ENCODE measurements at regions of chr20 and their contacts with region 1.

Region 1: DNA sequence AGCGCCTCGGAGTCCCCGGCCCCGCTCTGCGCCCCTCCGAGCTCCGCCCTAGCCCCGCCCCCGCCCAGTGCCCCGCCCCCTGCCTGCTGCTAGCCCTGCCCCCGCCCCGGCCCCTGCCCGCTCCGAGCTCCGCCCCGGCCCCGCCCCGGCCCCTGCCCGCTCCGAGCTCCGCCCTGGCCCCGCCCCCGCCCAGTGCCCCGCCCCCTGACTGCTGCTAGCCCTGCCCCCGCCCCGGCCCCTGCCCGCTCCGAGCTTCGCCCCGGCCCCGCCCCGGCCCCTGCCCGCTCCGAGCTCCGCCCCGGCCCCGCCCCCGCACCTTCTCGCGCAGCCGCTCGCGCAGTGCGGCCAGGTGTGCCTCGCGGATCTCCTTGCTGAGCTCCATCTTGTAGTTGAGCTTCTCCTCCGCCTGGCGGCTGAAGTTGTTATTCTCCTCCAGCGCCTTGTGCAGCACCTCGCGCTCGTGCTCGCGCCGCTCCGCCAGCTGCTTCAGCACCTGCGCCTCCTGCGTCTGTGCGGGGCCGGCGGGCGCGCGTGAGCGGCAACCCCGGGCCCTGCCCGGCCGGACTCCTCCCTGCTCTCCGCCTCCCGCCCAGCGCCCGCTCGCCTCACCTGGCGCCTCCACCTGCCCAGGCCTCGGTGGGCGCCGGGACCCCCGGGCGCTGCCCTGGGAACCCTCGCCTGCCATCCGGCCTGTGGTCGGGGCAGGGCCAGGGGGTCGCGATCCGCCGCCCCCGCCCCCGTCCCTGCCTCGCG is 11.3 kb downstream of the STMN3 start:
- DNase-seq: peak; percentile 94 to 99 (median 96)
- H3K4me3 ChIP-seq: peak overlapping the region; percentile 82
- H3K4me3 Mint-ChIP-seq: peak overlapping the region; percentile 41 to 95 (median 82)
- H3K27ac ChIP-seq: peak overlapping the region; percentile 79
- H3K27ac Mint-ChIP-seq: peak overlapping the region in 4 of 8 donors; percentile 74 to 96 (median 80)
- H3K4me1 ChIP-seq: peaks cover 25% of the 10 kb centered on the region
- H3K4me1 Mint-ChIP-seq: peaks cover 25 to 38% (median 29%) of the 10 kb centered on the region in 3 donors
- H3K27me3 ChIP-seq: no peaks in the 10 kb centered on the region
- H3K27me3 Mint-ChIP-seq: no peaks in the 10 kb centered on the region

Region 2: GRCh38 chr20:63520504-63520933 is 121.4 kb before region 1 on chr20 and contains the start of gene PPDPF:
- CTCF ChIA-PET with region 1: interaction called, 8 read pairs
- POLR2A ChIA-PET with region 1: interaction called, 10 read pairs
- DNase-seq: peak; percentile 79 to 89 (median 84)
- H3K4me3 ChIP-seq: peak within 1 kb of the TSS; percentile 70
- H3K4me3 Mint-ChIP-seq: peak within 1 kb of the TSS; percentile 76 to 91 (median 81)
- H3K27ac ChIP-seq: peak within 1 kb of the TSS; percentile 79
- H3K27ac Mint-ChIP-seq: peak within 1 kb of the TSS; percentile 35 to 91 (median 76)
- H3K4me1 ChIP-seq: peaks cover 20% of the 10 kb centered on the region
- H3K4me1 Mint-ChIP-seq: peaks cover 8 to 34% (median 10%) of the 10 kb centered on the region in 3 donors
- H3K27me3 ChIP-seq: no peaks in the 10 kb centered on the region
- H3K27me3 Mint-ChIP-seq: no peaks in the 10 kb centered on the region
- total RNA-seq, gene PPDPF: 207 to 218 TPM

Region 3: GRCh38 chr20:63553227-63553932 is 88.6 kb before region 1 on chr20:
- CTCF ChIA-PET with region 1: interaction called, 11 read pairs
- POLR2A ChIA-PET with region 1: interaction called, 3 read pairs
- DNase-seq: peak; percentile 82 to 93 (median 90)
- H3K4me3 ChIP-seq: peak overlapping the region; percentile 61
- H3K4me3 Mint-ChIP-seq: peak overlapping the region; percentile 73 to 89 (median 76)
- H3K27ac ChIP-seq: peak overlapping the region; percentile 38
- H3K27ac Mint-ChIP-seq: peak overlapping the region; percentile 47 to 96 (median 92)
- H3K4me1 ChIP-seq: peaks cover 16% of the 10 kb centered on the region
- H3K4me1 Mint-ChIP-seq: peaks cover 14 to 34% (median 14%) of the 10 kb centered on the region in 3 donors
- H3K27me3 ChIP-seq: no peaks in the 10 kb centered on the region
- H3K27me3 Mint-ChIP-seq: peaks cover 9 to 13% of the 10 kb centered on the region in 2 donors

Region 4: GRCh38 chr20:63574156-63574828 is 67.7 kb before region 1 on chr20 and contains the start of gene HELZ2:
- CTCF ChIA-PET with region 1: interaction called, 10 read pairs
- POLR2A ChIA-PET with region 1: no interaction called
- DNase-seq: peak; percentile 40 to 86 (median 68)
- H3K4me3 ChIP-seq: peak within 1 kb of the TSS; percentile 62
- H3K4me3 Mint-ChIP-seq: peak within 1 kb of the TSS; percentile 66 to 94 (median 78)
- H3K27ac ChIP-seq: peak within 1 kb of the TSS; percentile 70
- H3K27ac Mint-ChIP-seq: peak within 1 kb of the TSS in 7 of 8 donors; percentile 36 to 94 (median 80)
- H3K4me1 ChIP-seq: peaks cover 20% of the 10 kb centered on the region
- H3K4me1 Mint-ChIP-seq: peaks cover 3 to 7% (median 4%) of the 10 kb centered on the region in 3 donors
- H3K27me3 ChIP-seq: no peaks in the 10 kb centered on the region
- H3K27me3 Mint-ChIP-seq: peaks cover 0 to 4% of the 10 kb centered on the region in 2 donors
- total RNA-seq, gene HELZ2: 7.4 to 8.7 TPM

Region 5: GRCh38 chr20:63617092-63617865 is 24.7 kb before region 1 on chr20:
- CTCF ChIA-PET with region 1: interaction called, 22 read pairs
- POLR2A ChIA-PET with region 1: no interaction called
- DNase-seq: no peak
- H3K4me3 ChIP-seq: no peak overlapping the region
- H3K4me3 Mint-ChIP-seq: no peak overlapping the region
- H3K27ac ChIP-seq: no peak overlapping the region
- H3K27ac Mint-ChIP-seq: no peak overlapping the region
- H3K4me1 ChIP-seq: peaks cover 5% of the 10 kb centered on the region
- H3K4me1 Mint-ChIP-seq: peaks cover 12 to 20% (median 14%) of the 10 kb centered on the region in 3 donors
- H3K27me3 ChIP-seq: no peaks in the 10 kb centered on the region
- H3K27me3 Mint-ChIP-seq: no peaks in the 10 kb centered on the region

Region 6: GRCh38 chr20:63627129-63627750 is 14.7 kb before region 1 on chr20:
- CTCF ChIA-PET with region 1: interaction called, 22 read pairs
- POLR2A ChIA-PET with region 1: interaction called, 110 read pairs
- DNase-seq: peak; percentile 87 to 98 (median 91)
- H3K4me3 ChIP-seq: peak overlapping the region; percentile 93
- H3K4me3 Mint-ChIP-seq: peak overlapping the region; percentile 90 to 98 (median 95)
- H3K27ac ChIP-seq: peak overlapping the region; percentile 81
- H3K27ac Mint-ChIP-seq: peak overlapping the region; percentile 68 to 96 (median 86)
- H3K4me1 ChIP-seq: peaks cover 35% of the 10 kb centered on the region
- H3K4me1 Mint-ChIP-seq: peaks cover 31 to 52% (median 34%) of the 10 kb centered on the region in 3 donors
- H3K27me3 ChIP-seq: no peaks in the 10 kb centered on the region
- H3K27me3 Mint-ChIP-seq: no peaks in the 10 kb centered on the region

Region 7: GRCh38 chr20:63657937-63658748 is 16.2 kb after region 1 on chr20 and contains the start of gene RTEL1:
- CTCF ChIA-PET with region 1: interaction called, 12 read pairs
- POLR2A ChIA-PET with region 1: interaction called, 8 read pairs
- DNase-seq: peak; percentile 78 to 89 (median 84)
- H3K4me3 ChIP-seq: peak within 1 kb of the TSS; percentile 96
- H3K4me3 Mint-ChIP-seq: peak within 1 kb of the TSS; percentile 94 to 96 (median 95)
- H3K27ac ChIP-seq: peak within 1 kb of the TSS; percentile 66
- H3K27ac Mint-ChIP-seq: peak within 1 kb of the TSS; percentile 92 to 98 (median 95)
- H3K4me1 ChIP-seq: peaks cover 39% of the 10 kb centered on the region
- H3K4me1 Mint-ChIP-seq: peaks cover 26 to 48% (median 41%) of the 10 kb centered on the region in 3 donors
- H3K27me3 ChIP-seq: no peaks in the 10 kb centered on the region
- H3K27me3 Mint-ChIP-seq: peaks cover 0 to 9% of the 10 kb centered on the region in 2 donors
- total RNA-seq, gene RTEL1: 52.3 to 54.5 TPM

Measured in CD8-positive, alpha-beta memory T cell (primary cell).